IMR-90 (cell line): ENCODE measurements at regions of chr3 and their contacts with region 1.

Region 1: DNA sequence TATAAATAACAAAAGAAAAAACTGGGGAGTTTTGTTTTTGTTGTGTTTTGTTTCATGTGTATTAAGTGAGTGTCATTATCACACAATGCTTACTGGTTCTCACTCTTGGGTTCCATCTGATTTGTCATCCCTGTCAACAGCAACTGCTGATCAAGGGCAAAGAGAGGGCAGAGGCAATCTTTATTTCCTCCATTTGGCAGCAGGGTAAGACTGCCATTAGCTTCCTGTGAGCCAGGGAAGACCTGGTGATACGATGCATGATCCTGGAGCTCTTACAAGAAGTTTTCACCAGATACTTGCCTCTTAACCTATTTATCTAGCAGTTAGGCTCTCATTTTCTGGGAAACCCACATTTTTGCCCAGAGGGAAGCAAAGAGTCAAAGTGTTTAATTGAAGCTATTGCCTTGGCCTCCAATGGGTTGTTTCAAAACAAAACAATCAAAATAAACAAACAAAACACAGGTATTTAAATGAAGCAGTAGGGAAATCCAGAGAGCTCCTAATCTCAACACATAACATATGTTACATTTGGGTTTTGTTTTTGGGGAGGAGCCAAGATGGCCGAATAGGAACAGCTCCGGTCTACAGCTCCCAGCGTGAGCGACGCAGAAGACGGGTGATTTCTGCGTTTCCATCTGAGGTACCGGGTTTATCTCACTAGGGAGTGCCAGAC is 529.8 kb downstream of the MAGI1 start:
- DNase-seq: no peak
- ATAC-seq: no peak
- H3K4me3 ChIP-seq: no peak overlapping the region
- H3K27ac ChIP-seq: no peak overlapping the region
- H3K4me1 ChIP-seq: no peaks in the 10 kb centered on the region
- H3K27me3 ChIP-seq: no peaks in the 10 kb centered on the region
- CTCF ChIP-seq: no peak
- POLR2A ChIP-seq: no peak
- RAD21 ChIP-seq: no peak

Region 2: DNA sequence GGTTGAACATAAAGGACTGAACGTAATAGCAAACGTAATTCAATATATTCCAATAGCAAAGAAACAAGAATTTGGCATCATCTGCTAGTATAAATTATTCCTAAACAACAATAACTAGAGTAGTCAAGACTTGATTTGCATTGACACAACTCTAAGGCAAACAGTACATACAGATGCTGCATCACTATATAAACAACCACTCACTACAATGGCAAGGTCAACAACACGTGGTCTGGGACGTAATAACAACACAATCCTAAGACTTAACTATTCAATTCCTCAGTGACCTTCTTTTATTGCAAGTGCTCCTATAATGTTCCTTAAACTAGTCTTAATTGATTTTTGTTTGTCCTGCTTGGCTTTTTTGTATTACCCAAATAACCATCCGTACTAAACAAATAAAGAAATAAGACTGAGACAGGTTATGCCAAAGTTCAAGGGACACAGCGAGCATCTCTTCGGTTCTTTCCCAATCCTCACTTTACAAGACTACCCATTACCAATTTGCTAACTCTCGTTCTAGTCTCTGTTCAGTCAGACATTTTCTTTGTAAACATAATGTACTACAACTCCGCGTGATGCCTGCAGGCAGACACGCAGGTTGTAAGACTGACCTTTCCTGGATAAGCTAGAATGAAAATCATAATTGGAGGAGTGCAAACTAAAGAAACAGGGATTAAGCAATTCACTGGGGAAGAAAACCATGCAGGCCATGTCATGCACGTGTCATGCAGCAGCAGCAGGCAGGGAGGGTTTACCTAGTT is 61.4 kb before region 1 on chr3:
- CTCF ChIA-PET with region 1: no interaction called
- POLR2A ChIA-PET with region 1: no interaction called
- dilution Hi-C with region 1: no loop called
- in situ Hi-C with region 1: no loop called
- intact Hi-C with region 1: loop called (anchors 5 kb)
- DNase-seq: no peak
- ATAC-seq: no peak
- H3K4me3 ChIP-seq: no peak overlapping the region
- H3K27ac ChIP-seq: no peak overlapping the region
- H3K4me1 ChIP-seq: peaks cover 4% of the 10 kb centered on the region
- H3K27me3 ChIP-seq: no peaks in the 10 kb centered on the region
- CTCF ChIP-seq: no peak
- POLR2A ChIP-seq: no peak
- RAD21 ChIP-seq: no peak

Region 3: DNA sequence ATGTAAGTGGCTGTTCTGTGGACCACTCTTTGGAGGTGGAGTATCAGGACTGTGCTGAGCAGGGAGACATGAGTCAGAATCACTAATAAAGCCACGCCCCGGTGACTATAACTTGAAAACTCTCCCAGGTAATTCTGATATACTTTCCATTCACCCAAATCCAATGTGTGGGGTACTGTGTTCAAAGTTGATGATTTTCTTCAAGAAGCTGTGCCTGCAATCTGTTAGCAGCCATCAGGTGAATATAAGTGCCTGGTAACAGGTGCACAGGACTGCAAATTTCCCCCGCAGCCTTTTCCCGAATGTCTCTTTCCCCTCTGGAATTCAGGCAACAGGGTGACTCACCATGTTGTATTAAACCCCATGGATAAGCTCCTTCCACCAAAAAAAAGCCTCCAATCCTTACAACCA is 512.9 kb after region 1 on chr3:
- CTCF ChIA-PET with region 1: no interaction called
- POLR2A ChIA-PET with region 1: no interaction called
- dilution Hi-C with region 1: no loop called
- in situ Hi-C with region 1: no loop called
- intact Hi-C with region 1: no loop called
- DNase-seq: no peak
- ATAC-seq: no peak
- H3K4me3 ChIP-seq: no peak overlapping the region
- H3K27ac ChIP-seq: no peak overlapping the region
- H3K4me1 ChIP-seq: peaks cover 2% of the 10 kb centered on the region
- H3K27me3 ChIP-seq: no peaks in the 10 kb centered on the region
- CTCF ChIP-seq: no peak
- POLR2A ChIP-seq: no peak
- RAD21 ChIP-seq: no peak